ENCODE measurements at regions of chr1 and their contacts with region 1.

Region 1: GRCh38 chr1:88683541-88684481 is at the start of gene PKN2:
- DNase-seq: peak; percentile 88
- ATAC-seq: peak; percentile 97
- H3K4me3 ChIP-seq: peak within 1 kb of the TSS; percentile 92 to 100
- H3K27ac ChIP-seq: peak within 1 kb of the TSS; percentile 100
- H3K4me1 ChIP-seq: peaks cover 17% of the 10 kb centered on the region
- H3K27me3 ChIP-seq: no peaks in the 10 kb centered on the region
- CTCF ChIP-seq: peak; percentile 24; the same call in 1 of the 2 replicates
- total RNA-seq, gene PKN2: 74.1 TPM

Region 2: DNA sequence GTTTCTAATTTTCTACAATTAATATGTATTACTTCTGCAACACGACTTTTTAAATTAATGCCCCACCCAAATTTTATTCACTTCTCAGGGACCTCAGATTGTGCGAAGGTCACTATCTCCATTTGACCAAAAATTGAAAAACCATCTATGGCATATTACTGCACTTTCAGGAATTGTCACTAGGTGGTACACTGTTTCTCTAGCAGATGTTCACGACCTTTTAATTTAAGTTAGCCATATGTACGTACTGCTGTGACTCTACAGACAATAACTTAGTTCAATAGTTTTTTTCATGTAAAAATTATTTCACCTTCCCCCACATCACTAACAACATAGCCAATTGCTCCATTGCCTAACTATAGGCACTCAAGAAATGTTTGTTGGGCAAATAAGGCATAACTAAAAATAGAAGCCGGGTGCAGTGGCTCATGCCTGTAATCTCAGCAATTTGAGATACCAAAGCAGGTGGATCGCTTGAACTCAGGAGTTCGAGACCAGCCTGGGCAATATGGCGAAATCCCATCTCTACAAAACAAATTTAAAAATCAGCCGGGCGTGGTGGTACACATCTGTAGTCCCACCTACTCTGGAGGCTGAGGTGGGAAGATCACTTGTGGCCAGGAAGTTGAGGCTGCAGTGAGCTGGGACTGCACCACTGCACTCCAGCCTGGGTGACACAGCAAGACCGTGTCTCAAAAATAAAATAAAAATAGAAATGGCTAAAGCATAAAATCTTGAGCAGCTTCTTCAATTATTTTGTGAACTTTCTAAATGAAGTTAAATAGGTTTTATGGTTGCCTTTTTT is 75.5 kb before region 1 on chr1:
- CTCF ChIA-PET with region 1: interaction called, 12 read pairs
- POLR2A ChIA-PET with region 1: no interaction called
- in situ Hi-C with region 1: no loop called
- intact Hi-C with region 1: no loop called
- DNase-seq: peak; percentile 39
- ATAC-seq: peak; percentile 82
- H3K4me3 ChIP-seq: no peak overlapping the region
- H3K27ac ChIP-seq: no peak overlapping the region
- H3K4me1 ChIP-seq: 0 out of 2 replicates have a peak, but pooled peaks cover 3% of the 10 kb centered on the region
- H3K27me3 ChIP-seq: peaks cover 3% of the 10 kb centered on the region; the same call in 1 of the 2 replicates
- CTCF ChIP-seq: peak; percentile 83

Region 3: DNA sequence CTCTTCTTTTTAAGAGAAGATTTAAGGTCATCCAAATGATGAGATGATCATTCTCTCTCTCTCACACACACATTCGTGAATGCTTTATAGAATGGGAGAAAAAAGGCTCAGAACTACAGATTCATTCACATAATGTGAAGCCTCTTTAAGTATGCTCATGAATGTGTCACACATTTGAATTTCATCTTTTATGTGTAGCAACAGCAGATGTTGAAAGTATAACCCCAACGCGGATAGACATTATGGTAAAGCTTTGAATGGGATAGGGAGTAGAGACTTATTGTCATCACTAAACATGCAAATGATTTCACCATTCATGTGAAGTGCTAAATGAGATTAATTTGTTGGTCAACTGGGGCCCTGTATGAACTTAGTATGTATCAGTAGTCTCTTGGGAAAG is 15.4 kb before region 1 on chr1:
- CTCF ChIA-PET with region 1: interaction called, 11 read pairs
- POLR2A ChIA-PET with region 1: no interaction called
- in situ Hi-C with region 1: no loop called
- intact Hi-C with region 1: no loop called
- DNase-seq: no peak
- ATAC-seq: no peak
- H3K4me3 ChIP-seq: no peak overlapping the region
- H3K27ac ChIP-seq: no peak overlapping the region
- H3K4me1 ChIP-seq: no peaks in the 10 kb centered on the region
- H3K27me3 ChIP-seq: peaks cover 13% of the 10 kb centered on the region; the same call in 1 of the 2 replicates
- CTCF ChIP-seq: no peak

Region 4: GRCh38 chr1:88825721-88826120 is 141.9 kb after region 1 on chr1:
- CTCF ChIA-PET with region 1: no interaction called
- POLR2A ChIA-PET with region 1: interaction called, 13 read pairs
- in situ Hi-C with region 1: no loop called
- intact Hi-C with region 1: no loop called
- DNase-seq: no peak
- ATAC-seq: no peak
- H3K4me3 ChIP-seq: no peak overlapping the region
- H3K27ac ChIP-seq: no peak overlapping the region
- H3K4me1 ChIP-seq: no peaks in the 10 kb centered on the region
- H3K27me3 ChIP-seq: no peaks in the 10 kb centered on the region
- CTCF ChIP-seq: no peak

Region 5: GRCh38 chr1:88891318-88891950 is 207.6 kb after region 1 on chr1 and contains the start of gene GTF2B:
- CTCF ChIA-PET with region 1: interaction called, 10 read pairs
- POLR2A ChIA-PET with region 1: no interaction called
- in situ Hi-C with region 1: no loop called
- intact Hi-C with region 1: no loop called
- DNase-seq: peak; percentile 98
- ATAC-seq: peak; percentile 86
- H3K4me3 ChIP-seq: peak within 1 kb of the TSS; percentile 92 to 93
- H3K27ac ChIP-seq: peak within 1 kb of the TSS; percentile 92
- H3K4me1 ChIP-seq: peaks cover 25% of the 10 kb centered on the region
- H3K27me3 ChIP-seq: no peaks in the 10 kb centered on the region
- CTCF ChIP-seq: no peak
- total RNA-seq, gene GTF2B: 27.0 TPM